ENCODE measurements at regions of chr1 and their contacts with region 1.

Region 1: DNA sequence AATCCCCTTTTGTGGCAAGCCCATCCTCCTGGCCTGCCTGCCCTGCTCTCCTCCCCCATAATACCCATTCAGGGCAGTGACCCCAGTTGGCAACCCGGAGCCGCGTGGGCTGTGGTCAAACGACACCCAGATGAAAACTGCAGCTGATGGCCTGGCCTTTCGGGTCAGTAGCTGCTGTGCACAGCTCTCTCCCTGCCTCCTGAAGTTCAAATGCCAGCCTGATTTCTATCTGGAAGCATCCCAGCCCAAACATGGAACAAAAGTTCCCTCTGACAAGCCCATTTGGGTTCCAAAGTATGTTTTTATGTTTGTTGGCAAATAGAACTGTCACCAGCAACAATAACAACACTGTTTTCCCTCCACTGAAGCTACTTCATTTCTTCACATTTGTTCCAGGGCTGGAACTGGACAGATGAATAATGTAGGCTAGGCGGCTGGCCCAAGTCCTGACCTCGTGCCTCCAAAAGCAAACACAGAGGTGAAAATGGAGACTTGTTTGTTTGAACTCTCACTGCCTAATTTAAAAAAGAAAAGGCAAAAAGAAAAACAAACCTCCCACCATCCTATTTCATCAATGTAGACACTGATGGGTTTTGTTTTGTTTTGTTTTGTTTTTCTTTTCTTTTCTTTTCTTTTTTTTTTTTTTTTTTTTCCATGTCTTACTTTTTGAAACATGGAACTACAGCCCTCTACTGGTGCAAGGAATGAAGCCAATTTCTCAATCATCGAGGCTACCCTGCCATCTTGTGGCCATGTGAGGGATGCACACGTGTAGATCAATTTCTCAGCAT is 179.0 kb downstream of the ADSS2 start:
- DNase-seq: peak; percentile 95
- H3K4me3 ChIP-seq: no peak overlapping the region
- H3K27ac ChIP-seq: peak overlapping the region; percentile 58
- H3K4me1 ChIP-seq: peaks cover 21% of the 10 kb centered on the region
- H3K27me3 ChIP-seq: no peaks in the 10 kb centered on the region
- CTCF ChIP-seq: peak; percentile 77 to 97
- POLR2A ChIP-seq: no peak

Region 2: GRCh38 chr1:243525085-243525487 is 747.6 kb before region 1 on chr1:
- CTCF ChIA-PET with region 1: no interaction called
- POLR2A ChIA-PET with region 1: no interaction called
- dilution Hi-C with region 1: no loop called
- intact Hi-C with region 1: loop called (anchors 5 kb)
- DNase-seq: peak; percentile 91
- H3K4me3 ChIP-seq: no peak overlapping the region
- H3K27ac ChIP-seq: peak overlapping the region; percentile 95
- H3K4me1 ChIP-seq: peaks cover 9% of the 10 kb centered on the region
- H3K27me3 ChIP-seq: no peaks in the 10 kb centered on the region
- CTCF ChIP-seq: no peak
- POLR2A ChIP-seq: no peak

Region 3: GRCh38 chr1:243917177-243917862 is 355.3 kb before region 1 on chr1:
- CTCF ChIA-PET with region 1: interaction called, 12 read pairs
- POLR2A ChIA-PET with region 1: no interaction called
- dilution Hi-C with region 1: no loop called
- intact Hi-C with region 1: no loop called
- DNase-seq: peak; percentile 79
- H3K4me3 ChIP-seq: peak overlapping the region; percentile 0 to 42 (median 17)
- H3K27ac ChIP-seq: peak overlapping the region; percentile 82
- H3K4me1 ChIP-seq: peaks cover 18% of the 10 kb centered on the region
- H3K27me3 ChIP-seq: no peaks in the 10 kb centered on the region
- CTCF ChIP-seq: no peak
- POLR2A ChIP-seq: no peak

Region 4: GRCh38 chr1:244047621-244048471 is 224.8 kb before region 1 on chr1:
- CTCF ChIA-PET with region 1: interaction called, 19 read pairs
- POLR2A ChIA-PET with region 1: interaction called, 5 read pairs
- dilution Hi-C with region 1: no loop called
- intact Hi-C with region 1: loop called (anchors 1 kb)
- DNase-seq: peak; percentile 100
- H3K4me3 ChIP-seq: peak overlapping the region; percentile 66 to 86 (median 77)
- H3K27ac ChIP-seq: peak overlapping the region; percentile 93
- H3K4me1 ChIP-seq: peaks cover 33% of the 10 kb centered on the region
- H3K27me3 ChIP-seq: no peaks in the 10 kb centered on the region
- CTCF ChIP-seq: no peak
- POLR2A ChIP-seq: peak; percentile 85

Region 5: GRCh38 chr1:244302889-244303613 is 30.4 kb after region 1 on chr1:
- CTCF ChIA-PET with region 1: interaction called, 15 read pairs
- POLR2A ChIA-PET with region 1: no interaction called
- dilution Hi-C with region 1: no loop called
- intact Hi-C with region 1: loop called (anchors 1 kb)
- DNase-seq: peak; percentile 53
- H3K4me3 ChIP-seq: no peak overlapping the region
- H3K27ac ChIP-seq: peak overlapping the region; percentile 13
- H3K4me1 ChIP-seq: peaks cover 52% of the 10 kb centered on the region
- H3K27me3 ChIP-seq: no peaks in the 10 kb centered on the region
- CTCF ChIP-seq: no peak
- POLR2A ChIP-seq: no peak

Region 6: GRCh38 chr1:244391761-244392160 is 119.1 kb after region 1 on chr1:
- CTCF ChIA-PET with region 1: no interaction called
- POLR2A ChIA-PET with region 1: no interaction called
- dilution Hi-C with region 1: no loop called
- intact Hi-C with region 1: no loop called
- DNase-seq: no peak
- H3K4me3 ChIP-seq: no peak overlapping the region
- H3K27ac ChIP-seq: no peak overlapping the region
- H3K4me1 ChIP-seq: no peaks in the 10 kb centered on the region
- H3K27me3 ChIP-seq: no peaks in the 10 kb centered on the region
- CTCF ChIP-seq: no peak
- POLR2A ChIP-seq: no peak

Measured in endothelial cell of umbilical vein (primary cell).